T-cell (primary cell): ENCODE measurements at regions of chr4 and their contacts with region 1.

Region 1: DNA sequence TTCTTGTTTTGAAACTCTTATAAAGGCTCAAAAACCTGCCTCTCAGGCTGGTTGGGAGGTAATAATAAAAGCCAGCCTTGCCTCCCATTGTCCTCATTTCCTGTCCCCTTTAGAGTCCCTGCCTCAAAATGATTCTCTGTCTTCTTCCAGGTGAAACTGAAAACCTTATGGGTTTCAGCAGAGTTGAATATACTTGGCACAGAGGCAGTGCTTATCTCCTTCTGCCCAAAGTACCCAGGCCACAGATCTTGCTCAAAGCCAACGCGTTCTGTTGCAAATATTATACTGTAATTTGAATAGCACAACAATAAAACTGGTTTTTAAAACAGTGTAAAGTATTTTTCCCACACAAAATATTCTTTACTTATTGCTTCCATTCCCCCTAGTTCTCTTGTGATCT is 183.1 kb upstream of the GIMD1 start:
- DNase-seq: no peak
- ATAC-seq: no peak
- H3K4me3 ChIP-seq: no peak overlapping the region
- H3K4me3 Mint-ChIP-seq: no peak overlapping the region
- H3K27ac ChIP-seq: no peak overlapping the region
- H3K27ac Mint-ChIP-seq: no peak overlapping the region
- H3K4me1 ChIP-seq: no peaks in the 10 kb centered on the region
- H3K4me1 Mint-ChIP-seq: no peaks in the 10 kb centered on the region
- H3K27me3 ChIP-seq: no peaks in the 10 kb centered on the region
- H3K27me3 Mint-ChIP-seq: no peaks in the 10 kb centered on the region

Region 2: GRCh38 chr4:106522839-106523238 is 28.9 kb before region 1 on chr4:
- CTCF ChIA-PET with region 1: interaction called in 1 of 2 experiments, 11 read pairs
- POLR2A ChIA-PET with region 1: no interaction called
- DNase-seq: no peak
- ATAC-seq: no peak
- H3K4me3 ChIP-seq: no peak overlapping the region
- H3K4me3 Mint-ChIP-seq: no peak overlapping the region
- H3K27ac ChIP-seq: no peak overlapping the region
- H3K27ac Mint-ChIP-seq: no peak overlapping the region
- H3K4me1 ChIP-seq: no peaks in the 10 kb centered on the region
- H3K4me1 Mint-ChIP-seq: no peaks in the 10 kb centered on the region
- H3K27me3 ChIP-seq: peaks cover 0 to 2% of the 10 kb centered on the region in 2 experiments
- H3K27me3 Mint-ChIP-seq: peaks cover 0 to 3% of the 10 kb centered on the region in 2 donors

Region 3: GRCh38 chr4:107164962-107165475 is 613.3 kb after region 1 on chr4:
- CTCF ChIA-PET with region 1: no interaction called
- POLR2A ChIA-PET with region 1: no interaction called
- DNase-seq: no peak
- ATAC-seq: no peak
- H3K4me3 ChIP-seq: no peak overlapping the region
- H3K4me3 Mint-ChIP-seq: no peak overlapping the region
- H3K27ac ChIP-seq: no peak overlapping the region
- H3K27ac Mint-ChIP-seq: no peak overlapping the region
- H3K4me1 ChIP-seq: no peaks in the 10 kb centered on the region
- H3K4me1 Mint-ChIP-seq: no peaks in the 10 kb centered on the region
- H3K27me3 ChIP-seq: no peaks in the 10 kb centered on the region
- H3K27me3 Mint-ChIP-seq: no peaks in the 10 kb centered on the region